Posterior vena cava (tissue), 2 donors: ENCODE measurements at regions of chr1 and their contacts with region 1.

Region 1: DNA sequence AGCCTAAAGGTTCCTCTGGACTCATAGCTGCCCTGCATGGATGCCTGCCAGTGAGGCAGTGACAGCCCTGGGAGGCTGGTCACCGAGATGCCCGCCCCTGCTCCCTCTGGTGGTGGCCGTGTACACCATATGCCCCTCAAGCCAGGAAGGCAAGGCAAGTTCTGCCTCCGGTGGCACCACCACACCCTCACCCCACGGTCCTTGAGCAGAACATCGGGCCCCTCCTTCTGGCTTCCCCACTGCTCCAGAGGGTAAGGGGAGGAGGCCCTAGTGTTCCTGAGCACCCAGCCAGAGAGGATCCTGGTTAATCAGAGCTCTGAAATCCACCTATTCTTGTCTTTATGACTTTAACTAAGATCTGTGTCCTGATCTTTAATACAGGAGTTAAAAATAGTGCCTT is 1.6 kb upstream of the S100A14 start:
- DNase-seq: peak; percentile 93

Region 2: DNA sequence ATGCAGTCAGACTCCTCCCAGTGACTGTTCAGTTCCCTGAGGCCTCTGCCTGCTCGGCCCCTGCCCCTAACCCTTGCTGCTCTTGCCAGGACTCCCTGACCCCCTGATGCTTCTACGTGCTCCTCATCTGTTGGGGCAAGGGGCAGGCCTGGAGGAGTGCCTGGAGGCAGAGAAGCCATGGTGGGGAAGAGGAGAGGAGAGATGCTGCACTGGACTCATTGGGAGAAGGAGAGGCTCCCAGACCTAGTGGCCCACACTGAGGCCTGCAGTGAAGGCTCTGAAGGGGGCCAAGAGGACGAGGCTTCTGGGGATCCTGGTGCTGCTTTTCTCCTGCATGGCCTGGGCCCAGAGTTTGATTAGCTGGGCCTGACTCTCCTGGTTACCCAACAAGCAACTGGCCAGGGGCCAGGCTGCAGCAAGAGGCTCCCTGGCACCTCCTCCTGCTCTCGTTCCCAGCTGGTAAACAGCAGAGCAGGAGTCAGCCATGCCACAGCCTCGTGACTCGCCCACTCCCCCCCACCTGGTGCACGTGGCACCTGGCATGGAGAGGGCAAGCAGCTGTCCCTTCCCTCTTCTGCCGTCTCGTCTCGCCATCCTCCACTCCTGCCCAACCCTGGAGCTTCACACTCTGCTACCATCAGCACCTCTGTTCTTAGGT is 1785.2 kb before region 1 on chr1:
- intact Hi-C with region 1: loop called in 1 of 2 experiments (anchors 5 kb)
- DNase-seq: no peak